RWPE1 (cell line): ENCODE measurements at regions of chr5 and their contacts with region 1.

Region 1: DNA sequence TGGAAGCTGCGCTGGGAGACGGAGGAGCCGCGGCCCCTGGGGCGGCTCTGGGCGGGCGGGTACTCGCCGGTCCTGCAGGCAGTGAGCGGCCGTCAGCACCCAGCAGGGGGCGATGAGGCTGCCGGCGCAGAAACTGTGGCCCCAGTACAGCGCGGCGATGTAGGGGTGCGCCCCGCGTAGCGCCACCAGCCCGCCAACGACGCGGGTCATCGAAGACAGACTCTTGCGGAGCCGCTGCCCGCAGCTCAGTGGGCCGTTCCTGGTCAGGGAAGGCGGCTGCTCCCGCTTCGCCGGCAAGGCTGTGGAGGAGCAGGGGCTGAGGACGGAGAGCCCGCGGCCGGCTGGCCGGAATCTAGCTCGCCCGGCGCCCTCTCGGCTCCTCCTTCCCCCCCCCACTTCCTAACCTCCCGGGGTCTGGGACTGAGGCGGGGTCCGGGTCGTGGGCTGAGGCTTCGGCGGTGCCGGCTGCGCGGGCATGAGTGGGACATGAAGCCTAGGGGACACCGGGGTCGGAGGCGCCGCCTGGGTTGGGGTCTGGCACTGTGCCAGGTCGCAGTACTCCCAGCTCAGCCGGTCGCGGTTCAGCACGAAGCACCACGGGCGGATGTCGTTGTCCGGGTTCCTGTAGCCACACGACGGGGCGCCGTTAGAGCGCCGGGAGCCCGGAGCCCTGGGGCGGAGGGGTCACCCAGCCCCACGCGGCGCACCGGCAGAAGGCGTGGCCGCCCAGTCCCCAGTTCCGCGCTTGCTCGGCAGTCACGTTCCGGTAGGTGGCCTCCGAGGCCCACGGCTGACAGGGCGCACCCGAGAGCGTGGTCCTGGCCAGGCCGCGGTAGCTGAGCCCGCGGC is 3.6 kb upstream of the PFN3 start:
- DNase-seq: peak; percentile 89
- H3K27ac ChIP-seq: peak overlapping the region; percentile 78
- CTCF ChIP-seq: peak; percentile 79

Region 2: GRCh38 chr5:177317959-177318377 is 86.0 kb before region 1 on chr5:
- CTCF ChIA-PET with region 1: interaction called, 35 read pairs
- POLR2A ChIA-PET with region 1: no interaction called
- DNase-seq: peak; percentile 79
- H3K27ac ChIP-seq: no peak overlapping the region
- CTCF ChIP-seq: peak; percentile 97

Region 3: GRCh38 chr5:177362610-177363507 is 41.2 kb before region 1 on chr5:
- CTCF ChIA-PET with region 1: interaction called, 76 read pairs
- POLR2A ChIA-PET with region 1: interaction called, 3 read pairs
- DNase-seq: peak; percentile 85
- H3K27ac ChIP-seq: peak overlapping the region; percentile 89
- CTCF ChIP-seq: no peak

Region 4: GRCh38 chr5:177382423-177383029 is 21.5 kb before region 1 on chr5:
- CTCF ChIA-PET with region 1: interaction called, 11 read pairs
- POLR2A ChIA-PET with region 1: no interaction called
- DNase-seq: no peak
- H3K27ac ChIP-seq: no peak overlapping the region
- CTCF ChIP-seq: no peak

Region 5: GRCh38 chr5:177419051-177419450 is 15.0 kb after region 1 on chr5:
- CTCF ChIA-PET with region 1: interaction called, 100 read pairs
- POLR2A ChIA-PET with region 1: interaction called, 3 read pairs
- DNase-seq: no peak
- H3K27ac ChIP-seq: no peak overlapping the region
- CTCF ChIP-seq: no peak

Region 6: GRCh38 chr5:177446200-177447065 is 42.4 kb after region 1 on chr5 and contains the start of gene PRR7:
- CTCF ChIA-PET with region 1: interaction called, 210 read pairs
- POLR2A ChIA-PET with region 1: interaction called, 7 read pairs
- DNase-seq: peak; percentile 76
- H3K27ac ChIP-seq: peak within 1 kb of the TSS; percentile 88
- CTCF ChIP-seq: no peak

Region 7: GRCh38 chr5:177497292-177498033 is 93.4 kb after region 1 on chr5 and contains the start of gene PDLIM7:
- CTCF ChIA-PET with region 1: interaction called, 14 read pairs
- POLR2A ChIA-PET with region 1: interaction called, 3 read pairs
- DNase-seq: peak; percentile 99
- H3K27ac ChIP-seq: peak within 1 kb of the TSS; percentile 96
- CTCF ChIP-seq: no peak; the same call in 1 of the 2 replicates